Heart left ventricle (tissue), 16 donors: ENCODE measurements at regions of chr5 and their contacts with region 1.

Region 1: DNA sequence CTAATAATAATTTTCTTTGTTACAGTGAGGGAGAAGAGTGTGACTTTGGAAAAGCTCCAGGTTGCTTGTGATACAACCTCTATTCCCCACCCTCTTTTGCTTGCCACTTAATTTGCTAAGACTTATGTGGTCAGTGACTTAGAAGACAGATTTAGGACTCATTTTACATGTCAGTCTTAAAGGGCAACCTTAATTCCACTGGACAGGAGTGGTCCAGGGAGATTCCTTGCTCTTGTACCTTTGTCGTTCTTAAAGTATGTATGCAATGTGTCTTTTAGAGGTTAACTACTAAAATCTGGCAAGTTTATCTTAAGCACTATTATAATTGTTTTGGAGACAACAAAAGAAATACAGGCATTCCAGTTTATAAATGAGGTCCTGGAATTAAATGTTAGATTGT is 20.0 kb downstream of the SLC30A5 start:
- DNase-seq: no peak
- ATAC-seq: no peak
- H3K4me3 ChIP-seq: no peak overlapping the region
- H3K27ac ChIP-seq: no peak overlapping the region
- H3K4me1 ChIP-seq: no peaks in the 10 kb centered on the region
- H3K27me3 ChIP-seq: no peaks in the 10 kb centered on the region
- CTCF ChIP-seq: no peak
- POLR2A ChIP-seq: no peak

Region 2: GRCh38 chr5:69374911-69375446 is 261.1 kb after region 1 on chr5:
- intact Hi-C with region 1: loop called in 1 of 10 experiments (anchors 10 kb)
- DNase-seq: no peak
- ATAC-seq: no peak
- H3K4me3 ChIP-seq: no peak overlapping the region
- H3K27ac ChIP-seq: no peak overlapping the region
- H3K4me1 ChIP-seq: peaks cover 0 to 24% (median 14%) of the 10 kb centered on the region in 12 donors
- H3K27me3 ChIP-seq: no peaks in the 10 kb centered on the region
- CTCF ChIP-seq: no peak
- POLR2A ChIP-seq: no peak